A549 (cell line): ENCODE measurements at regions of chr5 and their contacts with region 1.

Region 1: GRCh38 chr5:134527146-134527960 is 1.9 kb downstream of the JADE2 start:
- DNase-seq: peak; percentile 94
- ATAC-seq: peak; percentile 64 to 77
- H3K4me3 ChIP-seq: peak overlapping the region; percentile 82
- H3K27ac ChIP-seq: peak overlapping the region; percentile 99 to 100
- H3K4me1 ChIP-seq: peaks cover 61% of the 10 kb centered on the region
- CTCF ChIP-seq: peak; percentile 67
- EP300 ChIP-seq: no peak
- POLR2A ChIP-seq: peak; percentile 34; the same call in 1 of the 2 replicates
- RAD21 ChIP-seq: peak; percentile 51 to 55; a peak in 4 of 5 replicates

Region 2: GRCh38 chr5:134394932-134395331 is 132.4 kb before region 1 on chr5:
- CTCF ChIA-PET with region 1: interaction called, 11 read pairs
- POLR2A ChIA-PET with region 1: no interaction called
- DNase-seq: no peak
- ATAC-seq: no peak
- H3K4me3 ChIP-seq: no peak overlapping the region
- H3K27ac ChIP-seq: no peak overlapping the region
- H3K4me1 ChIP-seq: peaks cover 14% of the 10 kb centered on the region; the same call in 1 of the 3 replicates
- CTCF ChIP-seq: no peak
- EP300 ChIP-seq: no peak
- POLR2A ChIP-seq: no peak
- RAD21 ChIP-seq: no peak

Region 3: GRCh38 chr5:134436523-134437339 is 90.6 kb before region 1 on chr5:
- CTCF ChIA-PET with region 1: interaction called, 9 read pairs
- POLR2A ChIA-PET with region 1: interaction called, 12 read pairs
- DNase-seq: peak; percentile 41 to 75
- ATAC-seq: peak; percentile 81
- H3K4me3 ChIP-seq: no peak overlapping the region
- H3K27ac ChIP-seq: peak overlapping the region; percentile 55 to 89
- H3K4me1 ChIP-seq: peaks cover 53% of the 10 kb centered on the region
- CTCF ChIP-seq: no peak
- EP300 ChIP-seq: no peak
- POLR2A ChIP-seq: no peak
- RAD21 ChIP-seq: no peak

Region 4: GRCh38 chr5:134479839-134480238 is 47.5 kb before region 1 on chr5:
- CTCF ChIA-PET with region 1: no interaction called
- POLR2A ChIA-PET with region 1: no interaction called
- DNase-seq: no peak
- ATAC-seq: no peak
- H3K4me3 ChIP-seq: no peak overlapping the region
- H3K27ac ChIP-seq: no peak overlapping the region
- H3K4me1 ChIP-seq: no peaks in the 10 kb centered on the region
- CTCF ChIP-seq: no peak
- EP300 ChIP-seq: no peak
- POLR2A ChIP-seq: no peak
- RAD21 ChIP-seq: no peak

Region 5: GRCh38 chr5:134511788-134512650 is 15.3 kb before region 1 on chr5:
- CTCF ChIA-PET with region 1: interaction called, 22 read pairs
- POLR2A ChIA-PET with region 1: interaction called, 46 read pairs
- DNase-seq: peak in 1 of 2 experiments; percentile 82
- ATAC-seq: peak; percentile 62 to 72
- H3K4me3 ChIP-seq: no peak overlapping the region
- H3K27ac ChIP-seq: peak overlapping the region; percentile 93 to 94
- H3K4me1 ChIP-seq: peaks cover 68% of the 10 kb centered on the region
- CTCF ChIP-seq: peak; percentile 45
- EP300 ChIP-seq: no peak
- POLR2A ChIP-seq: no peak
- RAD21 ChIP-seq: peak; percentile 61 to 69

Region 6: GRCh38 chr5:134561871-134562296 is 34.5 kb after region 1 on chr5:
- CTCF ChIA-PET with region 1: interaction called, 12 read pairs
- POLR2A ChIA-PET with region 1: no interaction called
- DNase-seq: peak; percentile 48 to 53
- ATAC-seq: peak; percentile 62 to 81; a peak in 5 of 6 replicates
- H3K4me3 ChIP-seq: no peak overlapping the region
- H3K27ac ChIP-seq: peak overlapping the region; percentile 29 to 75; a peak in 3 of 6 replicates
- H3K4me1 ChIP-seq: peaks cover 14% of the 10 kb centered on the region
- CTCF ChIP-seq: peak; percentile 37; the same call in 2 of the 3 replicates
- EP300 ChIP-seq: no peak
- POLR2A ChIP-seq: no peak
- RAD21 ChIP-seq: peak; percentile 20 to 41; a peak in 3 of 5 replicates

Region 7: GRCh38 chr5:134904630-134905245 is 377.4 kb after region 1 on chr5 and contains the start of gene PCBD2:
- CTCF ChIA-PET with region 1: no interaction called
- POLR2A ChIA-PET with region 1: interaction called, 12 read pairs
- DNase-seq: peak; percentile 83 to 94
- ATAC-seq: peak; percentile 89 to 92
- H3K4me3 ChIP-seq: peak within 1 kb of the TSS; percentile 74
- H3K27ac ChIP-seq: peak within 1 kb of the TSS; percentile 94 to 98
- H3K4me1 ChIP-seq: peaks cover 7% of the 10 kb centered on the region; the same call in 1 of the 3 replicates
- CTCF ChIP-seq: peak; percentile 96
- EP300 ChIP-seq: no peak
- POLR2A ChIP-seq: peak; percentile 65
- RAD21 ChIP-seq: peak; percentile 57 to 78
- polyA plus RNA-seq, gene PCBD2: 13.3 and 13.6 TPM in 2 replicates